BJ (cell line): ENCODE measurements at regions of chr15 and their contacts with region 1.

Region 1: GRCh38 chr15:89812011-89812835 is 2.4 kb downstream of the ANPEP start:
- DNase-seq: no peak
- H3K4me3 ChIP-seq: peak overlapping the region; percentile 80
- H3K27me3 ChIP-seq: no peaks in the 10 kb centered on the region
- CTCF ChIP-seq: no peak

Region 2: GRCh38 chr15:89794627-89795241 is 17.5 kb before region 1 on chr15:
- CTCF ChIA-PET with region 1: interaction called, 5 read pairs
- POLR2A ChIA-PET with region 1: interaction called, 10 read pairs
- DNase-seq: no peak
- H3K4me3 ChIP-seq: no peak overlapping the region
- H3K27me3 ChIP-seq: no peaks in the 10 kb centered on the region
- CTCF ChIP-seq: no peak

Region 3: GRCh38 chr15:89828241-89829082 is 16.2 kb after region 1 on chr15:
- CTCF ChIA-PET with region 1: no interaction called
- POLR2A ChIA-PET with region 1: no interaction called
- DNase-seq: no peak
- H3K4me3 ChIP-seq: no peak overlapping the region
- H3K27me3 ChIP-seq: no peaks in the 10 kb centered on the region
- CTCF ChIP-seq: no peak